Caco-2 (cell line): ENCODE measurements at regions of chr6 and their contacts with region 1.

Region 1: GRCh38 chr6:167683028-167683862 is 143.5 kb upstream of the AFDN start:
- DNase-seq: peak; percentile 61 to 86
- H3K4me3 ChIP-seq: no peak overlapping the region
- H3K4me3 Mint-ChIP-seq: peak overlapping the region; percentile 35
- H3K27ac Mint-ChIP-seq: peak overlapping the region; percentile 65
- H3K4me1 ChIP-seq: peaks cover 57% of the 10 kb centered on the region
- H3K4me1 Mint-ChIP-seq: peaks cover 40% of the 10 kb centered on the region
- H3K27me3 ChIP-seq: no peaks in the 10 kb centered on the region
- H3K27me3 Mint-ChIP-seq: no peaks in the 10 kb centered on the region
- CTCF ChIP-seq: no peak

Region 2: DNA sequence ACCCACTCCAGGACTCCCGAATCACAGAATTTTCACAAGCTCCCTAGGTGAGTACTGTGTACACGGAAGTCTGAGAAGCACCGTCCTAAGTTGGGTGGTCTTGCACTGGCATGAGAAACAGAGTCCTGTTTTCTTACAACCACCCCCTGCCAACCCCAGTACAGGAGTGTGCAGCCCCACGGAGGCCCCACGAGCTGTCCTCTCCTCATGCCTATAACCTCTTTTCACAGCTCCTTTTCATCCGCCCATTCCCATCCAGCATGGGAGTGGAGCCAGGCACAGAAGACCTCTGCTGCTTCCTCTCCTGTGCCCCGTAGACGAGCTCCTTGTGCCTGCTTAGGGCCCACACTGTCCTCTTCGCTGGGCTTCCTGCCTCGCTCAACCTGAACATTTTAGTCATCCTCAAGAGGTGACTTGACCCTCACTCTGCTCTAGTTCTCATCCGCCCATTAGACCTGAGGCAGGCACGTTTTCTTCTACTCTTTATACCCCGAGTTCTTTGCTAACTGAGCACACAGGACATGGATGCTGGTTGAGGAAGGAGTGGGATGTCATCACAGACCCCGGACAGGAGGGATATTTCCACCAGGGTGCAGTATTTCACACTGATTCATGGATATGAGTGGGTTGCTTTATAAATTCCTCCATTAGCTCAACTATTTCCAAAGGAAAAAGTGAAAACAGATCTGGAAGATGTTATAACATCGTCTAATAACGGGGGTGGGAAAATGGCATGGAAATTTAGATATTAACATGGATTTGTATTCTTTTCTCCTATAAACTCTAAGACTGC is 197.9 kb before region 1 on chr6:
- CTCF ChIA-PET with region 1: no interaction called
- POLR2A ChIA-PET with region 1: no interaction called
- intact Hi-C with region 1: loop called (anchors 5 kb)
- DNase-seq: peak in 1 of 2 experiments; percentile 46
- H3K4me3 ChIP-seq: no peak overlapping the region
- H3K4me3 Mint-ChIP-seq: no peak overlapping the region
- H3K27ac Mint-ChIP-seq: no peak overlapping the region
- H3K4me1 ChIP-seq: peaks cover 17% of the 10 kb centered on the region
- H3K4me1 Mint-ChIP-seq: peaks cover 32% of the 10 kb centered on the region
- H3K27me3 ChIP-seq: no peaks in the 10 kb centered on the region
- H3K27me3 Mint-ChIP-seq: no peaks in the 10 kb centered on the region
- CTCF ChIP-seq: peak; percentile 28 to 32

Region 3: GRCh38 chr6:167588181-167588919 is 94.9 kb before region 1 on chr6:
- CTCF ChIA-PET with region 1: no interaction called
- POLR2A ChIA-PET with region 1: no interaction called
- intact Hi-C with region 1: no loop called
- DNase-seq: no peak
- H3K4me3 ChIP-seq: no peak overlapping the region
- H3K4me3 Mint-ChIP-seq: no peak overlapping the region
- H3K27ac Mint-ChIP-seq: no peak overlapping the region
- H3K4me1 ChIP-seq: no peaks in the 10 kb centered on the region
- H3K4me1 Mint-ChIP-seq: no peaks in the 10 kb centered on the region
- H3K27me3 ChIP-seq: no peaks in the 10 kb centered on the region
- H3K27me3 Mint-ChIP-seq: no peaks in the 10 kb centered on the region
- CTCF ChIP-seq: no peak

Region 4: DNA sequence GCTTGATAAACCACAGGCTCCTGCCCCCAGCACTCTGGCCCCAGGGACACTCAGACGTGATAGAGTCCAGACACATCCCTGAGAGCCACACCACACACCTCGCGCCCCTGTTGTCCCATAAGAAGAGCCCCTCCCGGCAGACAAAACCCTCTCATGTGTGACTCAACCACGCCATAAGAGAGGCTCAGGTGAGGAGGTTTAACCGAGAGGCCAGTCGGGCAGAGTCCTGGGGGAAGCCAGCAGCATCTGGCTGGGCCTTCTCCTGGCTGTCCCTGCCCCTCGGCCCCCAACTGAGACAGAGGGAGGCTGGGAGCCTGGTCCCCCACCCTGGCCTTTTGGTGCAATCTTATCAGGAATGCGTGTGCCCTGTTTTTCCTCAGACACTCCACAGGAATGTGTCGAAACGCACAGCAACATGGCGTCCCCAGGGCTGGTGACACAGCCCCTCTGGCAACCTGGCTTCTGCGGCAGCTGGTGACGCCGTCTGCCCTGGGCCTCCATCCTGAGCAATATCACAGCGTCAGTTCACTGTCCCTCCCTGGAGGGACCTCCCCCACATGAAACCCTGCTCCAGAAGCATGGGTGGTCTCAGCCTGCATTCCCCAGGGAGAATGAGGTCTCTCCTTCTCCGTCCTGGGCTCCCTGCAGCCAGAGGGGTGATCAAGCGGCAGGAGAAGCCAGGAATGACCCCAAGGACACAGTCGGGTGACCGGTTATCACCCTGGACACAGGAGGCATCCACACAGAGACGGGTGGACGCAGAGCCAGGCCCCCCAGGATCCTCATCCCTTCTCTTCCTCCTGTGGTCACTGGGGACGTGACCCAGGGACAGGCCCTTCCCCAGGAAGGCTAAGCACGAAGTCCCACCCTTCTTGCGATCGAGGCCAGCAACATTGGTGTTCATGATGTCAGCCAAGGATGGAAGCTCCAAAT is 13.1 kb before region 1 on chr6:
- CTCF ChIA-PET with region 1: no interaction called
- POLR2A ChIA-PET with region 1: no interaction called
- intact Hi-C with region 1: no loop called
- DNase-seq: no peak
- H3K4me3 ChIP-seq: no peak overlapping the region
- H3K4me3 Mint-ChIP-seq: no peak overlapping the region
- H3K27ac Mint-ChIP-seq: peak overlapping the region; percentile 48
- H3K4me1 ChIP-seq: peaks cover 30% of the 10 kb centered on the region
- H3K4me1 Mint-ChIP-seq: peaks cover 24% of the 10 kb centered on the region
- H3K27me3 ChIP-seq: no peaks in the 10 kb centered on the region
- H3K27me3 Mint-ChIP-seq: no peaks in the 10 kb centered on the region
- CTCF ChIP-seq: no peak

Region 5: DNA sequence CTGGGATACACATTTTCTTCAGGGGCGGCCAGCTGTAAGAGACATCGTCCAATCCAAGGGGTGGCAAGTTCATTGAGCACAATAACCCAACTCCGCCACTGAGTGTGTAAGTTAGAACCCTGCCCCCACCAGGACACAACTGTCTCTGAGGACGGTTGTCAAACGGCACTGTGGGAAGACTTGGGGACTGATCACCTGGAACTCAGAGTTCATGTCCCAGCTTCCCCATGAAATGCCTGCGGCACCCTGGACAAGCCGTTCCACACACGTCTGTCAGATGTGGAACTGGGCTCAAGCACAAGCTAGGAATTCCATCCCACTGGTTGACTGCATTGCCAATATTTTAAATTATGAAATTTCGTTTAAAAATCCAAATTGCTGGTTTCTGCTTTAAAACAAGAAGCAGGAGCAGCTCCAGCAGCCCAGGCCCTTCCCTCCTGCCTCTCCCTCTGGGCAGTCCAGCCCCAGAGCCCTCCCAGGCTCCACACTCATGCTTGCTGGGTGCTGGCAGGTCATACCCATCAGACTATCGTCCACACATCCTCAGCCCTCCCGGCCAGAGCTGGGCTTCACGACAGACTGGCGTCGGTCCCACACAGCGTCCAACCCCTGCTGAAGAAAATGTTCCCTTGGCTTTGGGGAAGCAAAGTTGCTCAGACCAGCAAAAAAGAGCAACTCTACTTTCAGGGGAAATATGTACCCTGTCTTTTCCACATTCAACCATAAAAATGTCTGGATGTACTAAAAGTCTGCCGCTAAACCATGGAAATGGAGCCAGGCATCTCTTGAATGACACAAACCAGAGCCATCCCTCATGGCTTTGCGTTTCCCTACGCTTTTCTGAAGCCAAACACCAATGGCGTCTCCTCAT is 62.7 kb after region 1 on chr6:
- CTCF ChIA-PET with region 1: no interaction called
- POLR2A ChIA-PET with region 1: no interaction called
- intact Hi-C with region 1: loop called (anchors 5 kb)
- DNase-seq: no peak
- H3K4me3 ChIP-seq: no peak overlapping the region
- H3K4me3 Mint-ChIP-seq: peak overlapping the region; percentile 54
- H3K27ac Mint-ChIP-seq: peak overlapping the region; percentile 81
- H3K4me1 ChIP-seq: peaks cover 63% of the 10 kb centered on the region
- H3K4me1 Mint-ChIP-seq: peaks cover 20% of the 10 kb centered on the region
- H3K27me3 ChIP-seq: no peaks in the 10 kb centered on the region
- H3K27me3 Mint-ChIP-seq: no peaks in the 10 kb centered on the region
- CTCF ChIP-seq: no peak

Region 6: DNA sequence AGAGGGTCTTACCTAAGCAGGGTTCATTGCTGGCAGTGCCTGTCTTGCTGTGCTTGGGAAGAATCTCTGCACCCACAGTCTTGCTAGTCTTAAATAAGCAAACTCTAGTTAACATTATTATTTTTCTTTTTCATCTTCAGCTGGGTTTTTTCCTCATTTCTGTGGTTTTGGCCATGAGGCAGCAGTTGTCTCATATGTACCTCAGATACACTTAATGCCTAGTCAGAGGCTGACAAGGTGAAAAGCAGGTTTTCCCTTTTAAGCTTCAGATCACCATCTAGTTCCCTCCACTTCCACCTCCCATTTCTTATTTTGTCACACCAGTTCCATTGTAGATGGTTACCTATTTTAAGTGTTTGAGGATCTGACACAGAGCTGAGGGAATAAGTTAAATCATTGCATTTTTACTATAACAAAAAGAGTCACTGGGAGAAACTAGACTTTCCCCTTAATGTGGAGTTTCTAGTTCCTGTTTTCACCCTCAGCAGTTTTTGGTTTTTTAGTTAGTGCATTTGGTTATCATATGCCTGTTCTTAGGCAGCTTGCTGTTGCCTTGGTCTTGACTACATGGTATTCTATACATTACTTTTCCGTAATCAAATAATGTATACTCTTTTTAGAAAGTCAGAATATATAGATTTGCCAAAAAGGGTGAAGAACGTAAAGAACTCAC is 189.4 kb after region 1 on chr6:
- CTCF ChIA-PET with region 1: no interaction called
- POLR2A ChIA-PET with region 1: interaction called, 11 read pairs
- intact Hi-C with region 1: no loop called
- DNase-seq: no peak
- H3K4me3 ChIP-seq: no peak overlapping the region
- H3K4me3 Mint-ChIP-seq: no peak overlapping the region
- H3K27ac Mint-ChIP-seq: no peak overlapping the region
- H3K4me1 ChIP-seq: no peaks in the 10 kb centered on the region
- H3K4me1 Mint-ChIP-seq: no peaks in the 10 kb centered on the region
- H3K27me3 ChIP-seq: no peaks in the 10 kb centered on the region
- H3K27me3 Mint-ChIP-seq: no peaks in the 10 kb centered on the region
- CTCF ChIP-seq: no peak